ENCODE measurements at regions of chr19 and their contacts with region 1.

Region 1: GRCh38 chr19:52007806-52008557 is at the start of gene ZNF615:
- DNase-seq: peak; percentile 93
- ATAC-seq: peak; percentile 97
- H3K4me3 Mint-ChIP-seq: peak within 1 kb of the TSS; percentile 90
- H3K27ac Mint-ChIP-seq: peak within 1 kb of the TSS; percentile 98
- H3K4me1 Mint-ChIP-seq: peaks cover 15% of the 10 kb centered on the region
- H3K27me3 Mint-ChIP-seq: no peaks in the 10 kb centered on the region
- total RNA-seq, gene ZNF615: 8.7 to 9.0 TPM

Region 2: GRCh38 chr19:51493776-51494175 is 514.2 kb before region 1 on chr19:
- CTCF ChIA-PET with region 1: no interaction called
- POLR2A ChIA-PET with region 1: no interaction called
- intact Hi-C with region 1: no loop called
- DNase-seq: no peak
- ATAC-seq: no peak
- H3K4me3 Mint-ChIP-seq: no peak overlapping the region
- H3K27ac Mint-ChIP-seq: no peak overlapping the region
- H3K4me1 Mint-ChIP-seq: peaks cover 24% of the 10 kb centered on the region
- H3K27me3 Mint-ChIP-seq: peaks cover 18% of the 10 kb centered on the region

Region 3: GRCh38 chr19:51904331-51905165 is 103.4 kb before region 1 on chr19 and contains the start of gene ZNF649:
- CTCF ChIA-PET with region 1: no interaction called
- POLR2A ChIA-PET with region 1: no interaction called
- intact Hi-C with region 1: loop called in 1 of 2 experiments (anchors 1 kb)
- DNase-seq: peak; percentile 89
- ATAC-seq: peak; percentile 92
- H3K4me3 Mint-ChIP-seq: peak within 1 kb of the TSS; percentile 91
- H3K27ac Mint-ChIP-seq: peak within 1 kb of the TSS; percentile 99
- H3K4me1 Mint-ChIP-seq: peaks cover 22% of the 10 kb centered on the region
- H3K27me3 Mint-ChIP-seq: peaks cover 18% of the 10 kb centered on the region
- total RNA-seq, gene ZNF649: 9.6 to 11.2 TPM

Region 4: DNA sequence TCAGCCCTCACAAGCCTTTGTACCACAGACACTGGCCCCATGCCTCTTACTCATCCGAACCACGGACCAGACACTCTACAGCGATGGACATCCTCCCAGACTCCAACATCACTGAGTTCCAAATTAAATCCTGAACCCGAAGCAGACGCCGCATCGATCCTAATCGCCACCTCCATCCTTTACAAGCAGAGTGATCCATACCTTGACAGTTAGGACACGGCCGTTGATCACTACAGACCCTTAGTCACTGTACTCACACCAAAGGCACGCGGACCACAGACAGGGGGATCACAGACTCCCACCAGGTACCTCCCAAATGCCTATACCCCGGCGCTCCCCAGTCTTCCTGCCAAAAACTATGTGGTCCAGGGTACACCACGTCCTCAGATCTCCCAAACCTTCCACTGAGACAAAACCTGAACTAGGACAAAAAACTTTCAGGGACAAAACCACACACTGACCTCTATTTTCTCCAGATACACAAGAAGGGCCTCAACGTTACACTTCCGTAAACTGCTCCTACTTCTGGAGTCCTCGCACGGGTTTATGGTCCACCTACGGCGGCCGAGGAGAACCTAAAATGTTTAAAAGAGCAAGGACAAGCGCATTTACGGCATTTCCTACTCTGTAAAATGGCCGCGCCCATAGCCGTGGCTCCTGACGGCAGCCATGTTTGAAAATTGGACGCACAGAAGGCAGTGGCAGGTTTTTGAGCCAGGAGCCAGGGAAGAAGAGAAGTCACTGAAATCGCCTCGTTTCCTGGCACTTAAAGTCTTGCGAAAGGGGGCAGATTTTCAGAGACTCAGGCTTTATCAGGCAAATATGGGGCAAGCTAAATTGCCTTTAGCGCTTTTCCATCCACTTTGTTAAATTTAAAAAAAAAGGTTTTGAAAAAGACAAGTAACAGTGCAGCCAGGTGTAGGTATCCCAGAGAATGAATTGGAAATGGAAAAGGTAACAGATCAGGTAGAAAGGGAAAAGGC is 21.4 kb before region 1 on chr19 and contains the start of gene ZNF350:
- CTCF ChIA-PET with region 1: no interaction called
- POLR2A ChIA-PET with region 1: no interaction called
- intact Hi-C with region 1: loop called (anchors 1 kb)
- DNase-seq: peak; percentile 94
- ATAC-seq: peak; percentile 99
- H3K4me3 Mint-ChIP-seq: peak within 1 kb of the TSS; percentile 85
- H3K27ac Mint-ChIP-seq: peak within 1 kb of the TSS; percentile 95
- H3K4me1 Mint-ChIP-seq: peaks cover 8% of the 10 kb centered on the region
- H3K27me3 Mint-ChIP-seq: no peaks in the 10 kb centered on the region
- total RNA-seq, gene ZNF350: 7.1 to 7.9 TPM

Region 5: GRCh38 chr19:52028027-52028779 is 20.2 kb after region 1 on chr19 and contains the start of gene ZNF614:
- CTCF ChIA-PET with region 1: no interaction called
- POLR2A ChIA-PET with region 1: no interaction called
- intact Hi-C with region 1: loop called (anchors 1 to 2 kb)
- DNase-seq: peak; percentile 93
- ATAC-seq: peak; percentile 94
- H3K4me3 Mint-ChIP-seq: peak within 1 kb of the TSS; percentile 81
- H3K27ac Mint-ChIP-seq: peak within 1 kb of the TSS; percentile 88
- H3K4me1 Mint-ChIP-seq: peaks cover 13% of the 10 kb centered on the region
- H3K27me3 Mint-ChIP-seq: no peaks in the 10 kb centered on the region
- total RNA-seq, gene ZNF614: 9.4 to 10.6 TPM

Region 6: GRCh38 chr19:52048555-52049501 is 40.8 kb after region 1 on chr19 and contains the start of gene ZNF432:
- CTCF ChIA-PET with region 1: interaction called, 4 read pairs
- POLR2A ChIA-PET with region 1: interaction called, 3 read pairs
- intact Hi-C with region 1: loop called in 1 of 2 experiments (anchors 1 kb)
- DNase-seq: peak; percentile 88
- ATAC-seq: peak; percentile 88
- H3K4me3 Mint-ChIP-seq: peak within 1 kb of the TSS; percentile 94
- H3K27ac Mint-ChIP-seq: peak within 1 kb of the TSS; percentile 100
- H3K4me1 Mint-ChIP-seq: peaks cover 16% of the 10 kb centered on the region
- H3K27me3 Mint-ChIP-seq: no peaks in the 10 kb centered on the region
- total RNA-seq, gene ZNF432: 11.5 to 12.8 TPM

Region 7: DNA sequence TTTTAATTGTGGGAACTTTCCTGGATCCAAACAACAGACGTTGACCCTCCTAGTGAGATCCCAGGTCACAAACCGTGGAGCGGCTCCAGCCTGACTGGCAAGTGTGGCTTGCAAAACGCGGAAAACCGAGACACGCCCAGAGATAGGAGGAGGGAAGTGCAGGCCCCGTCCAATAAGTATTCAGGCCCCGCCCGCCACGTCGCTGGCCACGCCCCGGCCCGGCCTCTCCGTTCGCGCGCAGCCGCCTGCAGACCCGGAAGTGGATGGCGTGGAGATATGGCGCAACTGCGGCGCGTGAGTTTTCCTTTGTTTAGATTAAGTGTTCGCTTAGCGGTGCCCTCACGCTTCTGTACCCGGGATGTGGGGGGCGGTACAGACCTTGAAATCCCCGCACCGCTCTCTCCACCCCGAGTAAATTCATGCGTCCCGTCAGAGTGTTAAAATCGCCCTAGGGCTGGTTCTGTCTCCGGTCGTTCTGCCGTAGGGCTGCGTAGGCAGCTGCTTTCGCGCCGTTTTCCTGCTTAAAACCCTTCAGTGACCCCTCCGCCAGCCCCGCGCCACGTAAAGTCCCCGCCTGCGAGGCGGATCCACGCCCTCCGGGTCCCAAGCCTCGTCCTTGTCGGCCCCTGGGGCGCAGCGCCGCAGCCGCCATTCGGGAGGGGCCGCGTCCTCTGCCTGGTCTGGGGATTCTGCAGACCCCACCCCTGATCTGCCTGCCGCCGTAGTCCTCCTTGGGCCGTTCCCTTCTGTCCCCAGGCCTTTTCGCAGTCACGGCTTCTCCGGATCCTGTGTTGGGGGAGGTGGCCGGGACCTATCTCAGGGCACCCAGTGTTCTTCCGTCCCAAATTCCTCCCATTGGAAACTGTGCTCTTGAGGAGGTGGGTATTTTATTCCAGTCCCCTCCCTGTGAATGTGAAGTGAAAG is 261.6 kb after region 1 on chr19 and contains the start of gene ZNF766:
- CTCF ChIA-PET with region 1: no interaction called
- POLR2A ChIA-PET with region 1: no interaction called
- intact Hi-C with region 1: loop called in 1 of 2 experiments (anchors 5 kb)
- DNase-seq: peak; percentile 98
- ATAC-seq: peak; percentile 99
- H3K4me3 Mint-ChIP-seq: peak within 1 kb of the TSS; percentile 96
- H3K27ac Mint-ChIP-seq: peak within 1 kb of the TSS; percentile 96
- H3K4me1 Mint-ChIP-seq: peaks cover 35% of the 10 kb centered on the region
- H3K27me3 Mint-ChIP-seq: no peaks in the 10 kb centered on the region
- total RNA-seq, gene ZNF766: 28.6 to 34.2 TPM

Measured in activated CD4-positive, alpha-beta T cell treated with anti-CD3 and anti-CD28 coated beads for 36 hours (primary cell).